ENCODE measurements at regions of chr7 and their contacts with region 1.

Region 1: DNA sequence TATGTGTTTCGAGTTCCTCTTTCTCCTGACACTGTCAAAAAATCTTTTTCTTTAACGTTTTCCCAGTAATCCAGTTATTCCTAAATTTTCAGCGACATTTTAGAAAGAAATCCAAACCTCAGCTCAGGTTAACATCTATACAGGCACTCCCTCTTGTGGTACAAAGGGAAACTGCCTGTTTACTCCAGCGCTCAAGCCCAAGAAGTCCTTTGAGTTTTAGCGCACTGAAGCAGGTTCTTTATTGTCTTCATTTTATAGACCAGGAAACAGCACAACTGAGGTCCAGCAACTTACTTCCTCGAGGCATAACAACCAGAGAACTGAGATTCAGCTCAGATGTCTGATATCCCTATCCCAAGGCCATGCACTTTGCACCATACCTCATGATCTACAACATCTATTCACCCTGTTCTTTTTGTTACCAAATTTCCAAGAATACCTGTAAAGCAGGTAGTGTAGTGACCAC is 287.2 kb upstream of the MKLN1 start:
- DNase-seq: peak; percentile 75
- ATAC-seq: peak; percentile 84
- H3K4me3 Mint-ChIP-seq: peak overlapping the region; percentile 30
- H3K27ac Mint-ChIP-seq: peak overlapping the region; percentile 70
- H3K4me1 Mint-ChIP-seq: peaks cover 62% of the 10 kb centered on the region
- H3K27me3 Mint-ChIP-seq: no peaks in the 10 kb centered on the region
- CTCF ChIP-seq: peak; percentile 97

Region 2: DNA sequence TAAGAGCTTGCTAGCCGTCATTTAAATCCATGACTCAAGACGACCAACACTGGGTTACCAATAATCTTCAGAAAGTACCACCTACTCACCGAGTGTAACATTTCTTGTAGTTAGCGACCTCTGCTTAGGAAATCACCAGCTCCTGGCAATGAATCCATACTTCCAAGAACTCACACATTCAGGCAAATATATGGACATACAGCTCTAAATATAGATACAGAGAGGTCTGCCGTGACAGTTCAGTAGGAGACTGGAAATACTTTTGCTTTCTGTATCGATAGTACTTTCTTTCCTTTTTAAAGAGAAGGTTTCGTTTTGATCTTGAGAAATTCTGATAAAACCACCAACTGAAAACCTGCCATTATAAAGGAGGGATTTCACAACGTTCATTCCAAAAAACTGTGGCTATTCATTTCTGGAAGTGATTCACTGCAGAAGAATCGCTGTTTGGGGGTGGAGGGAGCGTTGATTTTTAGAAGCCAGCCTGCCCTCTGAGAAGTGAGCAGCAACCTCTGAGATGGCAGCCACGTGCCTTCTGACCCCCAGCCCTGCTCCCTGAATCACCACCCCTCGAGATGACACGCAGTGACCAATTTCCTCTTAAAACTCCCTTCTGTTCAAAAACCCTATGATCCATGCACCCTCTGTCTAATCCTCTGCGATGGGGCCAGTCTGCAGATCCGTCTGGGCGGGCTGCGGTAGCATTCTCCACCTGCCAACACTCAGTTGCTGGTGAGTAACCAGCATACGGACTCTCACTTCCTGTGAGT is 127.5 kb before region 1 on chr7:
- CTCF ChIA-PET with region 1: interaction called, 10 read pairs
- POLR2A ChIA-PET with region 1: interaction called, 4 read pairs
- intact Hi-C with region 1: no loop called
- DNase-seq: peak; percentile 93
- ATAC-seq: peak; percentile 79
- H3K4me3 Mint-ChIP-seq: peak overlapping the region; percentile 87
- H3K27ac Mint-ChIP-seq: peak overlapping the region; percentile 97
- H3K4me1 Mint-ChIP-seq: peaks cover 85% of the 10 kb centered on the region
- H3K27me3 Mint-ChIP-seq: no peaks in the 10 kb centered on the region
- CTCF ChIP-seq: no peak

Region 3: GRCh38 chr7:130951303-130951975 is 89.1 kb before region 1 on chr7:
- CTCF ChIA-PET with region 1: interaction called, 16 read pairs
- POLR2A ChIA-PET with region 1: interaction called, 11 read pairs
- intact Hi-C with region 1: no loop called
- DNase-seq: no peak
- ATAC-seq: peak; percentile 9
- H3K4me3 Mint-ChIP-seq: no peak overlapping the region
- H3K27ac Mint-ChIP-seq: no peak overlapping the region
- H3K4me1 Mint-ChIP-seq: peaks cover 61% of the 10 kb centered on the region
- H3K27me3 Mint-ChIP-seq: no peaks in the 10 kb centered on the region
- CTCF ChIP-seq: no peak

Region 4: DNA sequence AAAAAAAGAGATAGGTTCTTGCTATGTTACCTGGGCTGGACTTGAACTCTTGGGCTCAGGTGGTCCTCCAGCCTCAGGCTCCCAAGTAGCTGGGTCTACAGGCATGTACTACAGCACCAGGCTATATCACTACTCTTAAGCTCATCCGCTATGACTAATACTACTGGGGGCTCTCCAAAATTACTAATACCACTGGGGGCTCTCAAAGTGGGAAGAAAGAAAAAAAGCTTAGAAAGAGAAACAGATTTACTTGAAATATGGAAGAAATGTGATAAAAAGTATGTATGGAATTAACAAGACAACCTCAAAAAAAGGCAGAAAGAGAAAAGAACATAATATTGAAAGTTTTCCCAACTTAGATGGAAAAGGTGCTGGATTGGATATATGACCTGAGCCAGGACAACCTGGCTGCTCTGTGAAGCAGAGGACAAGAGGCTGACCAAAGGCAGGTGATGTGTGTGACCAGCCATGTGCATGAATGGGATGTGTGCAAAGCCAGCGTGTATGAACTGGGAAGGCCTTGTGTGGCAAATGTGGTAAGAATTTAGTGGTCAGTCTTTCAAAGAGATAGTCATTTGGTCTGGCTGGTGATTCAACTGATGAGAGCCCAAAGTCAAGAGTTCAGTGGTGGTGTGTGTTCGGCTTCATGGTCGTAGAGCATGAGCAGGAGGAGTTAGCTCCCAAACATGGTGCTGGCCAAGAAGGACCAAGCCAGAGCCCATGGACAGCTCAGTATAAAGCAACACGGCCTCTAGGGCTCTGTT is 74.1 kb before region 1 on chr7:
- CTCF ChIA-PET with region 1: interaction called, 18 read pairs
- POLR2A ChIA-PET with region 1: interaction called, 41 read pairs
- intact Hi-C with region 1: no loop called
- DNase-seq: peak; percentile 53
- ATAC-seq: peak; percentile 18
- H3K4me3 Mint-ChIP-seq: peak overlapping the region; percentile 26
- H3K27ac Mint-ChIP-seq: peak overlapping the region; percentile 83
- H3K4me1 Mint-ChIP-seq: peaks cover 69% of the 10 kb centered on the region
- H3K27me3 Mint-ChIP-seq: no peaks in the 10 kb centered on the region
- CTCF ChIP-seq: no peak

Region 5: DNA sequence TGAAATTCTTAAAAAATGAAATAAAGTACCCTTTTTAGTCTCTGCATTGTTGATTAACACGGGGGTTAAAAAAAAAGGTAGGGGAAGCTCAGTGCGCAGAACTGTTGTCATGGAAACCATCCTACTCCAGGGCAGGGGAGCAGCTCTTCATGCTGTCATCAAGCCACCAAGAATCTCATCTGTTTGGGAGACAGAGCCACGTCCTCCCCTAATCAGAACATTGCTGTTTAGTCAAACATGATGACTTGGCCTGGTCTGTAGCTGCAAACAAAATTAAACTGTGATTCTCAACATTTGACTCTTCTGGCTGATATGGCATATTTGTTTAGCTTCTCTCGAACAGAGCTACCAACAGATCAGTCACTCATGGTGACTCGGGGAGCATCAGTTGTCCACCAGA is 52.1 kb before region 1 on chr7:
- CTCF ChIA-PET with region 1: interaction called, 208 read pairs
- POLR2A ChIA-PET with region 1: interaction called, 3 read pairs
- intact Hi-C with region 1: loop called (anchors 2 kb)
- DNase-seq: no peak
- ATAC-seq: peak; percentile 60
- H3K4me3 Mint-ChIP-seq: no peak overlapping the region
- H3K27ac Mint-ChIP-seq: peak overlapping the region; percentile 68
- H3K4me1 Mint-ChIP-seq: peaks cover 75% of the 10 kb centered on the region
- H3K27me3 Mint-ChIP-seq: no peaks in the 10 kb centered on the region
- CTCF ChIP-seq: no peak

Region 6: GRCh38 chr7:130996841-130997231 is 43.7 kb before region 1 on chr7:
- CTCF ChIA-PET with region 1: interaction called, 17 read pairs
- POLR2A ChIA-PET with region 1: interaction called, 3 read pairs
- intact Hi-C with region 1: no loop called
- DNase-seq: peak; percentile 69
- ATAC-seq: peak; percentile 82
- H3K4me3 Mint-ChIP-seq: peak overlapping the region; percentile 20
- H3K27ac Mint-ChIP-seq: peak overlapping the region; percentile 85
- H3K4me1 Mint-ChIP-seq: peaks cover 76% of the 10 kb centered on the region
- H3K27me3 Mint-ChIP-seq: no peaks in the 10 kb centered on the region
- CTCF ChIP-seq: no peak

Region 7: GRCh38 chr7:131076032-131076431 is 35.5 kb after region 1 on chr7:
- CTCF ChIA-PET with region 1: no interaction called
- POLR2A ChIA-PET with region 1: no interaction called
- intact Hi-C with region 1: no loop called
- DNase-seq: no peak
- ATAC-seq: no peak
- H3K4me3 Mint-ChIP-seq: no peak overlapping the region
- H3K27ac Mint-ChIP-seq: peak overlapping the region; percentile 77
- H3K4me1 Mint-ChIP-seq: peaks cover 53% of the 10 kb centered on the region
- H3K27me3 Mint-ChIP-seq: no peaks in the 10 kb centered on the region
- CTCF ChIP-seq: no peak

Region 8: GRCh38 chr7:131087756-131088658 is 47.5 kb after region 1 on chr7:
- CTCF ChIA-PET with region 1: no interaction called
- POLR2A ChIA-PET with region 1: no interaction called
- intact Hi-C with region 1: no loop called
- DNase-seq: no peak
- ATAC-seq: no peak
- H3K4me3 Mint-ChIP-seq: no peak overlapping the region
- H3K27ac Mint-ChIP-seq: no peak overlapping the region
- H3K4me1 Mint-ChIP-seq: peaks cover 60% of the 10 kb centered on the region
- H3K27me3 Mint-ChIP-seq: no peaks in the 10 kb centered on the region
- CTCF ChIP-seq: no peak

Region 9: GRCh38 chr7:131219312-131220041 is 179.0 kb after region 1 on chr7:
- CTCF ChIA-PET with region 1: no interaction called
- POLR2A ChIA-PET with region 1: no interaction called
- intact Hi-C with region 1: no loop called
- DNase-seq: no peak
- ATAC-seq: no peak
- H3K4me3 Mint-ChIP-seq: no peak overlapping the region
- H3K27ac Mint-ChIP-seq: no peak overlapping the region
- H3K4me1 Mint-ChIP-seq: peaks cover 12% of the 10 kb centered on the region
- H3K27me3 Mint-ChIP-seq: no peaks in the 10 kb centered on the region
- CTCF ChIP-seq: no peak